ENCODE measurements at regions of chr1 and their contacts with region 1.

Region 1: DNA sequence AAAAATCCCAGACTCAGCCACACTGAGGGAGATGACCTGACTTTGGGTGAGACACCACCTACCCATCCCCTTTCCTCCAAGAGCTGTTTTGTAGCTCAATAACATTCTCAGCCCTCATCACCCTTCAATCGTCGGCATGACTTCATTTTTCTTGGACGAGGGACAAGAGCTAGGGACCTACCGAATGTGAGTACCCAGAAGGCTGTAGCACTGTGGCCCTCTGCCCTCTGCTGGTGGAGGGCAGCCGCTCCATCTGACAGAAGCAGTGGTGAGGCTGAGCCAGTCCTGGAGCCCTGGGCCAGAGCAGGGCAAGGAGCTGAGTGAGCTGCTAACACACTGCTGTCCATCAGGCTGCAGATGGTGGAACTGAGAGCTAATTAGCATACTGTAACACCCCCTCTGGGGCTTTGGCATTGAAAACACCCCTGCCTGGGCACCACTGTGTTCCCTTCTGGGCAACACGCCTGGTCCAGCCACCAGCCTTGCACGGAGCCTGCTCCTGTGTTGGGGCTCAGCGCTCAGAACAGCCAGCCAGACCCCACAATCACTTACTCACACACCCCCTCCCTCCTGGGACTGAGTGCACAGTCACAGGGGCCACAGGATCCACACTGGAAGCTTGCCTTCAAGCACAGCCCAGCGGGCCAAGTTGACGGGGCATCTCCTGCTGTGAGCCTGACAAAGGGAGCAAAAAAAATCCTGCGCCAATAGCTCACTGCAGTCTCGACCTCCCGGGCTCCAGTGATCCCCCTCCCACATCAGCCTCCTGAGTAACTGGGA is 18.3 kb upstream of the ALPL start:
- DNase-seq: peak; percentile 21
- H3K4me3 Mint-ChIP-seq: no peak overlapping the region
- H3K27ac Mint-ChIP-seq: no peak overlapping the region
- H3K4me1 Mint-ChIP-seq: peaks cover 11% of the 10 kb centered on the region
- H3K27me3 Mint-ChIP-seq: peaks cover 18% of the 10 kb centered on the region

Region 2: GRCh38 chr1:21467961-21468360 is 23.0 kb before region 1 on chr1:
- CTCF ChIA-PET with region 1: no interaction called
- POLR2A ChIA-PET with region 1: no interaction called
- DNase-seq: no peak
- H3K4me3 Mint-ChIP-seq: no peak overlapping the region
- H3K27ac Mint-ChIP-seq: no peak overlapping the region
- H3K4me1 Mint-ChIP-seq: no peaks in the 10 kb centered on the region
- H3K27me3 Mint-ChIP-seq: no peaks in the 10 kb centered on the region

Region 3: GRCh38 chr1:21478356-21478755 is 12.6 kb before region 1 on chr1:
- CTCF ChIA-PET with region 1: no interaction called
- POLR2A ChIA-PET with region 1: interaction called, 10 read pairs
- DNase-seq: no peak
- H3K4me3 Mint-ChIP-seq: no peak overlapping the region
- H3K27ac Mint-ChIP-seq: no peak overlapping the region
- H3K4me1 Mint-ChIP-seq: no peaks in the 10 kb centered on the region
- H3K27me3 Mint-ChIP-seq: peaks cover 3% of the 10 kb centered on the region

Region 4: DNA sequence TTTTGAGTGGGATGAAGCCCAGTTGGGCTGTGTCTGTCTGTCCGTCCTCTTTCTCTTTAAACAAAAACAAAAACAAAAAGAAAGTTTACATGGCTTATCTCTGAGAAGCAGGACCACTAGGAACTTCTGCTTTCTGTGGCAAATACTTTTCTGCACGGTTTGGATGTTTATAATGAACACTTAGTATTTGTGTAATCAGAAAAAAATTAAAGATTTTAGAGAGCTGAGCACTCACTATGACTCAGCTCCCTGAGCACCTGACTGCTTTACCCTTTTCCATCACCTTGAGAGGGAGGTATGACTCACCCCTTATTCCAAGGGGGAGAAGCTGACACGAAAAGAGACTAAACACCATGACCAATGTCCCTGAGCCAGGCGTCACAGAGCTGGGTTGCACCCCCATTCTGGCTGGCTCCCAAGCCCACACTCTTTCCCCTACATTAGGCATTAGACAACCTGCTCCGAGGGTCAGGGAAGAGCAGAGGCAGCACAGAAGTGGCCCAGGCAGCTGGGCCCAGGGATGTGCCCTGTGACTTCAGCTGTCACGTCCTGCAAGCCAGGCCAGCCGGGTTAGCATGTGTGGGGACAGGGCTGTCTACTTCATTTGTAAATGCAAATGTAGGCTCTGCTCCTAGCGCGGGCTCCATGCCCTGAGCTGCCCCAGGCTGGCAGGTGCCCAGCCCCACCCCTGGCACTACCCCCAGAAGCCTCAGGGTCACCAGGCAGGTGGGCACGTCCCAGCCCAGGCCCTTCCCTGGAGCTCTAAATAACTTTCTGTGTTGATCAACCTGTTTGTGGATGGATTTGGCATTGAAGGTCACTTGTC is 147.8 kb after region 1 on chr1:
- CTCF ChIA-PET with region 1: no interaction called
- POLR2A ChIA-PET with region 1: no interaction called
- DNase-seq: no peak
- H3K4me3 Mint-ChIP-seq: no peak overlapping the region
- H3K27ac Mint-ChIP-seq: no peak overlapping the region
- H3K4me1 Mint-ChIP-seq: no peaks in the 10 kb centered on the region
- H3K27me3 Mint-ChIP-seq: no peaks in the 10 kb centered on the region